Cardiac septum (tissue), 1 donor: ENCODE measurements at regions of chr22 and their contacts with region 1.

Region 1: GRCh38 chr22:20079745-20080444 is at the start of gene DGCR8:
- DNase-seq: peak; percentile 97
- total RNA-seq, gene DGCR8: 19.1 TPM

Region 2: GRCh38 chr22:20039683-20040325 is 40.1 kb before region 1 on chr22:
- intact Hi-C with region 1: no loop called
- DNase-seq: no peak

Region 3: DNA sequence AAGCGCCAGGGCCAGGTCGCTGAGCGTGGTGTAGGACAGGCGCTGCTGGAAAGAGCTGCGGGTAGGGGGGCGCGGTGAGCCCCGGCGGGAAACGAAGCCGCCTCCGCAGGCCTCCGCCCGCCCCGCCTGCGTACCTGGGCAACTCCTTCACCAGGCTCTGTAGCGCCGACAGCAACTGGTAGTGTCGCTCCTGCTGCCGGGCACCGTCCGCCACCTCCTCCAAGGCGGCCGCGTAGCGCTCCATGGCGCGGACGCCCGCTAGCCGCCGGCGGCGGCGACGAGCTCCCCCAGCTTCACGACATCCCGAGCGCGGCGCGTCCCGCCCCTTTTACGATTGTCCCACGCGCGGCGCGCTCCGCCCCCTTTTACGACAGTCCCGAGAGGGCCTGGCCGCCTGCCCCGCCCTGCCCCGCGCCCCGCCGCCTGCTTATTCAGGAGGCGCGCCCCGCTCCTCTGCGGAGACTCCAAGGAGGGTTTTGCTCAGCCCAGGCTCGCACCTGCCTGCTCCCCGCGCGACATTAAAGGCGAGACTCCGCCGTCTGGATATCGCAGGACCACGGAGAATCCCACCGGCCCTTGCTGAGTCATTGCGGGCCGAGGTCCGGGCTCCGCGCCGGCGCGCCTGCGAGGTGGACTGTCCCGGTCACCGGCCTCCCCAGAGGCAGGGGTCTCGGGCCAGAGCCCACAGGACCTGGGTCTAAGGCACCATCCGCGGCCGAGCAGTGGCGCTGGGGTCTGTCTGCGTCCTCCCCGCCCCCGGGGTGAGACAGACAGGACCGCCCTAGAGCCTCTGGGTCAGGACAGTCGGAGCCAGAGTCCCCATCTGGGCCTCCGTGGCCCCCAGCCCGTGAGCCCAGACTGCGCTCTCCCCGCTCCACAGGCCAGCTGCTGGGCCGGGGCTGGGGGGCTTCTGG is 240.1 kb after region 1 on chr22 and contains the start of gene DGCR6L:
- intact Hi-C with region 1: loop called (anchors 5 kb)
- DNase-seq: peak; percentile 98
- total RNA-seq, gene DGCR6L: 45.5 TPM